ENCODE measurements at regions of chr12 and their contacts with region 1.

Region 1: GRCh38 chr12:69266036-69266635 is 26.8 kb downstream of the CPSF6 start:
- DNase-seq: peak in 1 of 2 experiments; percentile 52
- H3K4me3 ChIP-seq: no peak overlapping the region
- H3K27ac ChIP-seq: 0 out of 2 replicates have a peak overlapping the region, but pooled peaks have one; percentile 13
- H3K4me1 ChIP-seq: peaks cover 16% of the 10 kb centered on the region
- H3K27me3 ChIP-seq: no peaks in the 10 kb centered on the region
- CTCF ChIP-seq: no peak

Region 2: DNA sequence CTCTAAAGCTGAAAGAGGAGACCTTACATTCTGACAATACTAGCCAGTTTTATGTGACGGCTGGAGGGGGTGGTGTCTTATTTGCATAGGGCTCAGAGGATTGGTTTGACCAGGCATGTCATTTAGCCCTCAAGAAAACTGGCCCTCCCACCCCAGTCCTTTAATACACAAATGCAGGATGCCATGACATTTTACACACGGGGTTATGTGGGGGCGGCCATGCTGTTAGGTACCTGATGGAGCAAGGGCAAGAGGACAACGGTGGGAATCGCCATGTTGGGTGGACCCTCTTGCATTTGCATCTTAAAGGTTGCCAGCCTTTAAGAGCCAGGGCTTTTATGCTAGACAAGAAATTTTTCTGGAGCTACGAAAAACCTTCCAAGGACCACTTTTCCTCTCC is 434.9 kb before region 1 on chr12:
- CTCF ChIA-PET with region 1: no interaction called
- POLR2A ChIA-PET with region 1: no interaction called
- intact Hi-C with region 1: loop called (anchors 10 kb)
- DNase-seq: no peak
- H3K4me3 ChIP-seq: no peak overlapping the region
- H3K27ac ChIP-seq: no peak overlapping the region
- H3K4me1 ChIP-seq: no peaks in the 10 kb centered on the region
- H3K27me3 ChIP-seq: no peaks in the 10 kb centered on the region
- CTCF ChIP-seq: no peak